Naive thymus-derived CD4-positive, alpha-beta T cell (primary cell): ENCODE measurements at regions of chr10 and their contacts with region 1.

Region 1: DNA sequence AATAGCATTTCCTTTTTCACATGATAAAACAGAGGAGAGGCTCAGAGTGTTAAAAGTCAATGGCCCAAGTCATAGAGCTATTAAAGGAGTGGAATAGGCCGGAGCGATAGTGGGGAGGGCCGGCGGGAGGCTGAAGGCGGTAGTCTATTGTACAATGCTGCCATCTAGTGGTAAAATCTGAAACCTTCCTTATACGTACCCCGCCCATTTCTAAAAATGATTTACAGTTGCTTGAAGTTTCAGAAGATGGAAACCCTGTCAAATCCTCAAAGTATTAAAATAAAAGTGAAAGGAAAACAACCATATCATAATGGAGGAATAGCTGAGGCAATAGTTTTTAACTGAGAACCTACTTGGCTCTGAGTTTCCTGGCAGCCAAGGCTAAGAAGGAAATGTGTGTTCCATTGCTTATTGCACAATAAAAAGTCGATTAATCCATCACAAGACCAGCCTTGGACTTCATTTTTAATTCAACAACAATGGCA is 209.1 kb downstream of the CCSER2 start:
- DNase-seq: peak in 7 of 9 donors; percentile 33 to 62 (median 55)
- ATAC-seq: peak; percentile 82
- H3K4me3 ChIP-seq: no peak overlapping the region
- H3K4me3 Mint-ChIP-seq: peak overlapping the region in 1 of 10 donors; percentile 31
- H3K27ac ChIP-seq: no peak overlapping the region
- H3K27ac Mint-ChIP-seq: peak overlapping the region in 1 of 9 donors; percentile 39
- H3K4me1 ChIP-seq: peaks cover 4 to 7% of the 10 kb centered on the region in 2 donors
- H3K4me1 Mint-ChIP-seq: peaks cover 9 to 23% (median 13%) of the 10 kb centered on the region in 7 donors
- H3K27me3 ChIP-seq: peaks cover 0 to 3% of the 10 kb centered on the region in 2 donors
- H3K27me3 Mint-ChIP-seq: peaks cover 15 to 22% (median 17%) of the 10 kb centered on the region in 5 donors

Region 2: GRCh38 chr10:84139126-84140035 is 398.1 kb before region 1 on chr10 and contains the start of gene GHITM:
- CTCF ChIA-PET with region 1: no interaction called
- POLR2A ChIA-PET with region 1: no interaction called
- intact Hi-C with region 1: loop called in 1 of 2 experiments (anchors 5 kb)
- DNase-seq: peak; percentile 98 to 100 (median 100)
- ATAC-seq: peak; percentile 97
- H3K4me3 ChIP-seq: peak within 1 kb of the TSS; percentile 92
- H3K4me3 Mint-ChIP-seq: peak within 1 kb of the TSS; percentile 88 to 98 (median 94)
- H3K27ac ChIP-seq: peak within 1 kb of the TSS; percentile 98
- H3K27ac Mint-ChIP-seq: peak within 1 kb of the TSS; percentile 93 to 99 (median 98)
- H3K4me1 ChIP-seq: peaks cover 15 to 18% of the 10 kb centered on the region in 2 donors
- H3K4me1 Mint-ChIP-seq: peaks cover 20 to 45% (median 36%) of the 10 kb centered on the region in 7 donors
- H3K27me3 ChIP-seq: no peaks in the 10 kb centered on the region
- H3K27me3 Mint-ChIP-seq: peaks cover 0 to 10% (median 0%) of the 10 kb centered on the region in 5 donors
- total RNA-seq, gene GHITM: 61.5 to 115 (median 76.3) TPM

Region 3: DNA sequence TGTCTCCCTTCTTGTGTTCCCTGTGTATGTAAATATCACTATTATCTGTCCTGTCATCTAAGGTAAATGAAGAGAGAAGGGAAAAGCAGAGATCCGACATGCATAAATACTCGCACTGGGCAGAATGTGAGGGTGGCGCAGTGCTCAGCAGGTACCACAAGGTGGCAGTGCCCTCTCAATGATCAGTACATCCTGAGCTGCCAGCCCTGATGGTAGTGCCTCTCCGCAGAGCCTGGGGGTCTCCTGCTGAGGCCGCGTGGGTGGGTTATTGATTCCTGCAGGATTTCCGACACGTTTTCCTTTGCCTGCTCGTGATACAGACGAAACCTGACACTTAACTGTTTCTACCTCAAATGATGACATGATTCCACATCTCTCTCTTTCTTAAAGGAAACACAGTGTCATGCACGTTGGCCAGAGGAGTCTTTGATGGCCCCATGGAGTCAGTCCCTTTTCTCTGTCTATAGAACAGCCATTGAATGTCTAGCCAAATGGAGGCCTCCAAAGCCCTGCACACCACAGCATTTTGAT is 272.8 kb before region 1 on chr10:
- CTCF ChIA-PET with region 1: interaction called, 129 read pairs
- POLR2A ChIA-PET with region 1: interaction called, 3 read pairs
- intact Hi-C with region 1: loop called (anchors 1 kb)
- DNase-seq: peak; percentile 37 to 74 (median 61)
- ATAC-seq: peak; percentile 94
- H3K4me3 ChIP-seq: no peak overlapping the region
- H3K4me3 Mint-ChIP-seq: no peak overlapping the region
- H3K27ac ChIP-seq: no peak overlapping the region
- H3K27ac Mint-ChIP-seq: no peak overlapping the region
- H3K4me1 ChIP-seq: peaks cover 0 to 3% of the 10 kb centered on the region in 2 donors
- H3K4me1 Mint-ChIP-seq: peaks cover 0 to 16% (median 7%) of the 10 kb centered on the region in 7 donors
- H3K27me3 ChIP-seq: no peaks in the 10 kb centered on the region
- H3K27me3 Mint-ChIP-seq: peaks cover 12 to 36% (median 25%) of the 10 kb centered on the region in 5 donors

Region 4: DNA sequence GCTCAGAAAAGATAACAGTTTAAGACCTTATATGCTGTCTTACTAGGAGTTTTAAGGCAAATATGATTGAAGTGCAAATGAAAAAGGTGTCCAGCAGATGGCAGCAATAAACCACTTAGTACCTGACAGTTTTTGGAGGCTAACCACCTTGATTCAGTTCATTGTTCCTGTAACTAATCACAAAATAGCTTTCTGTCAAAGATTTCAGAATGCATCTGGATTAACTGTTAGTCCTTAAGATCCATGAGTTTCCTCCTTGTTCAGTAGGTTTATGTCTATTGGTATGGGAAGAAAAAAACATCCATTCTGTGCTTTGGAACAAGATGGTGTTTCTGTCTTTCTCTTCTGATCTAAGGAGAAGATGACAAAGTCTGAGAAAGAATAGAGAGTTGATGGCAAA is 162.5 kb before region 1 on chr10:
- CTCF ChIA-PET with region 1: interaction called, 6 read pairs
- POLR2A ChIA-PET with region 1: no interaction called
- intact Hi-C with region 1: loop called (anchors 1 kb)
- DNase-seq: peak in 7 of 9 donors; percentile 34 to 68 (median 57)
- ATAC-seq: peak; percentile 70
- H3K4me3 ChIP-seq: no peak overlapping the region
- H3K4me3 Mint-ChIP-seq: peak overlapping the region in 1 of 10 donors; percentile 4
- H3K27ac ChIP-seq: no peak overlapping the region
- H3K27ac Mint-ChIP-seq: peak overlapping the region in 5 of 9 donors; percentile 18 to 79 (median 41)
- H3K4me1 ChIP-seq: peaks cover 0 to 5% of the 10 kb centered on the region in 2 donors
- H3K4me1 Mint-ChIP-seq: peaks cover 19 to 55% (median 37%) of the 10 kb centered on the region in 7 donors
- H3K27me3 ChIP-seq: no peaks in the 10 kb centered on the region
- H3K27me3 Mint-ChIP-seq: no peaks in the 10 kb centered on the region

Region 5: DNA sequence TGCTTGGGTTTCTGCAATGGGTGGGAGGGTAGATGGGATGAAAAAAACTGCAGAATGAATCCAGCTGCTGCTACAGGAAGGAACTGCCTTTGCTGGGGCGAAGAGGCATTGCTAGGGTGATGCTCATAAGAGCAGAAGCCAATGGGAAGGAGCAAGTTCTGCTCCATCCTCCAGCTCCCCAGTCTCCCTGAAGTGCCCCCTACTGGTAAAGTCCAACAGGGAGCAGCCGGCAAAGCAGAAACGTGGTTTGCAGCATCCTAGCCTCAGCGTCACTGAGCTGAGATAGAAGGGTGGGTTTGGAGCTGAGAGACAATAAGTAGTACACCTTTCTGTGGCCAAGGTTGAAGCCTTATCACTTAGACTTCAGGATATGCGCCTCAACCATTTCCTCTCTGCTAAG is 11.4 kb after region 1 on chr10:
- CTCF ChIA-PET with region 1: interaction called, 13 read pairs
- POLR2A ChIA-PET with region 1: no interaction called
- intact Hi-C with region 1: no loop called
- DNase-seq: no peak
- ATAC-seq: peak; percentile 22
- H3K4me3 ChIP-seq: no peak overlapping the region
- H3K4me3 Mint-ChIP-seq: no peak overlapping the region
- H3K27ac ChIP-seq: no peak overlapping the region
- H3K27ac Mint-ChIP-seq: no peak overlapping the region
- H3K4me1 ChIP-seq: no peaks in the 10 kb centered on the region
- H3K4me1 Mint-ChIP-seq: peaks cover 0 to 2% (median 0%) of the 10 kb centered on the region in 7 donors
- H3K27me3 ChIP-seq: no peaks in the 10 kb centered on the region
- H3K27me3 Mint-ChIP-seq: peaks cover 4 to 26% (median 25%) of the 10 kb centered on the region in 5 donors

Region 6: GRCh38 chr10:84590327-84591193 is 53.1 kb after region 1 on chr10:
- CTCF ChIA-PET with region 1: no interaction called
- POLR2A ChIA-PET with region 1: no interaction called
- intact Hi-C with region 1: no loop called
- DNase-seq: no peak
- ATAC-seq: no peak
- H3K4me3 ChIP-seq: no peak overlapping the region
- H3K4me3 Mint-ChIP-seq: no peak overlapping the region
- H3K27ac ChIP-seq: no peak overlapping the region
- H3K27ac Mint-ChIP-seq: no peak overlapping the region
- H3K4me1 ChIP-seq: no peaks in the 10 kb centered on the region
- H3K4me1 Mint-ChIP-seq: no peaks in the 10 kb centered on the region
- H3K27me3 ChIP-seq: no peaks in the 10 kb centered on the region
- H3K27me3 Mint-ChIP-seq: peaks cover 3 to 22% (median 9%) of the 10 kb centered on the region in 5 donors

Region 7: GRCh38 chr10:84626397-84627087 is 89.1 kb after region 1 on chr10:
- CTCF ChIA-PET with region 1: no interaction called
- POLR2A ChIA-PET with region 1: no interaction called
- intact Hi-C with region 1: no loop called
- DNase-seq: no peak
- ATAC-seq: no peak
- H3K4me3 ChIP-seq: no peak overlapping the region
- H3K4me3 Mint-ChIP-seq: no peak overlapping the region
- H3K27ac ChIP-seq: no peak overlapping the region
- H3K27ac Mint-ChIP-seq: no peak overlapping the region
- H3K4me1 ChIP-seq: no peaks in the 10 kb centered on the region
- H3K4me1 Mint-ChIP-seq: no peaks in the 10 kb centered on the region
- H3K27me3 ChIP-seq: no peaks in the 10 kb centered on the region
- H3K27me3 Mint-ChIP-seq: peaks cover 0 to 12% (median 0%) of the 10 kb centered on the region in 5 donors

Region 8: DNA sequence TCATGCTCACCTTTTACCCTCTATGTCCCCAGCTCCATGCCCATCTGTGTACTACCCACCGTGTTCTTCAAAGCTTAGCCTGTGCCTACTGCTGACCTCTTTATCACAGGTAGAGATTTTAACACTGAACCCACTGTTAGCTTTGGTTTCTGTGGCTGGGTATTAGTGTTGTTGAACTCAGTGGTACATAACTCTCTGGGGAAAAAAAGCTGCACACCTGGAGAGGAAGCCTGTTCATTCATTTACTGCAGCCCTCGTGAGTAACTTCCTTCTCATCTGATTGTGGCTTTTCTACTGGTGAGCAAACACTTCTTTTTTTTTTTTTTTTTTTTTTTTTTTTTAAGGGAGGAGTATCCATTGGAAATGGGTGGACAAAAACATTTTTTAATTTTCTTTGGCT is 117.2 kb after region 1 on chr10:
- CTCF ChIA-PET with region 1: no interaction called
- POLR2A ChIA-PET with region 1: no interaction called
- intact Hi-C with region 1: no loop called
- DNase-seq: no peak
- ATAC-seq: no peak
- H3K4me3 ChIP-seq: no peak overlapping the region
- H3K4me3 Mint-ChIP-seq: no peak overlapping the region
- H3K27ac ChIP-seq: no peak overlapping the region
- H3K27ac Mint-ChIP-seq: no peak overlapping the region
- H3K4me1 ChIP-seq: no peaks in the 10 kb centered on the region
- H3K4me1 Mint-ChIP-seq: peaks cover 0 to 2% (median 0%) of the 10 kb centered on the region in 7 donors
- H3K27me3 ChIP-seq: no peaks in the 10 kb centered on the region
- H3K27me3 Mint-ChIP-seq: peaks cover 5 to 31% (median 13%) of the 10 kb centered on the region in 5 donors

Region 9: DNA sequence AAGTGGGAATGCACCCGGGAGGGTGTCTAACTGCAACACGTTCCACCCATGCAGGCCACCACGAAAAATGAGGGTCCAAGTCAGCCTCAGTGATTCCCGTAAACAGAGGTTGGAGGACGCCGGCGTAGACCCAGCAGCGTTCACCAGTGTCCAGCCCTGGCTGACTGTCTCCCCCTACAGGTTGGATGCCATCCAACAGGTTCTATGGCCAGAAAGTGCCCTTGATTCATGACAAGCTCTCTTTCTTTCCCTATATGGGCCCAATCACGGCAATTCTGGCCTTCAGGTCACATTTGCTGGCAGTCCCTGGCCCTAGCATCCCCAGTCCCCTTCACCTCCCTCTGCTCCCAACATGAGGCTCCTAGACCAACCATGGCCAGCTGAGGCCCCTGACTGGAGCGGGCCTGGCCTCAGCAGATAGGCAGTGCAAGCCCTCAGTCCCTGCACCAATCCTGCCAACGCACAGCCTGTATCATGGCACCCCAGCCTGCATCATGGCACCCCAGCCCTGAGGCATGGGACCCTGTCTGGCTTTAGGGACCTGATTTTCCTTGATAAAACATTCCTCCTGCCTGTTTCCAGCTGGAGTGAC is 1601.7 kb after region 1 on chr10:
- CTCF ChIA-PET with region 1: no interaction called
- POLR2A ChIA-PET with region 1: no interaction called
- intact Hi-C with region 1: loop called in 1 of 2 experiments (anchors 2 kb)
- DNase-seq: no peak
- ATAC-seq: no peak
- H3K4me3 ChIP-seq: no peak overlapping the region
- H3K4me3 Mint-ChIP-seq: no peak overlapping the region
- H3K27ac ChIP-seq: no peak overlapping the region
- H3K27ac Mint-ChIP-seq: peak overlapping the region in 1 of 9 donors; percentile 33
- H3K4me1 ChIP-seq: no peaks in the 10 kb centered on the region
- H3K4me1 Mint-ChIP-seq: no peaks in the 10 kb centered on the region
- H3K27me3 ChIP-seq: no peaks in the 10 kb centered on the region
- H3K27me3 Mint-ChIP-seq: peaks cover 0 to 7% (median 0%) of the 10 kb centered on the region in 5 donors